ENCODE measurements at regions of chr11 and their contacts with region 1.

Region 1: GRCh38 chr11:86456052-86456939 is 81.6 kb downstream of the CCDC81 start:
- DNase-seq: peak; percentile 95
- H3K4me3 Mint-ChIP-seq: no peak overlapping the region
- H3K27ac Mint-ChIP-seq: no peak overlapping the region
- H3K4me1 Mint-ChIP-seq: peaks cover 8% of the 10 kb centered on the region
- H3K27me3 Mint-ChIP-seq: no peaks in the 10 kb centered on the region

Region 2: DNA sequence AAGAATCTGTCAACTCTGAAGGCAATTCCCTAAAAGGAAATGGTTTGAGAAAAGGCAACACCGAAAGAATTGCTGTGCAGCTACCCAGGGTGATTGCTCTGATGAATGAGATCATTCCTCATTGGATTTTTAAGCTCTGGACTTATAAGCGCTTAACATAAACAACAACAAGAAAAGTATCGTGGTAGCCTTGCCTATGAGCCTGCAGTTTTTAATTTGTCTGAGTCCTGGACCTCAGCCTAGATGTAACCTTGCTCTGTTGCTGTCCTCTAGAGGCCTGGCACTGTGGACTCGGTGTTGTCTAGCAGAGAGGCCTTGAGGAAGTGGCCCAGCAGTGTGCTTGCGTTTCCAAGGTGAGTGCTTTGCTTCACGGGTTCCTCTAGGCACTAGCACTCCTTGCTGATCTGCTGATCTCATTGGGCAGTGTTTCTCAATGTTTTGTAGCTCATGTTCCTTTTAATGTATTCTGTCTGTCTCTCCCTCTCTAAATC is 61.2 kb before region 1 on chr11:
- CTCF ChIA-PET with region 1: no interaction called
- intact Hi-C with region 1: no loop called
- DNase-seq: no peak
- H3K4me3 Mint-ChIP-seq: no peak overlapping the region
- H3K27ac Mint-ChIP-seq: no peak overlapping the region
- H3K4me1 Mint-ChIP-seq: no peaks in the 10 kb centered on the region
- H3K27me3 Mint-ChIP-seq: no peaks in the 10 kb centered on the region

Region 3: GRCh38 chr11:86608251-86608799 is 152.0 kb after region 1 on chr11:
- CTCF ChIA-PET with region 1: interaction called, 72 read pairs
- intact Hi-C with region 1: loop called (anchors 1 kb)
- DNase-seq: peak; percentile 70
- H3K4me3 Mint-ChIP-seq: no peak overlapping the region
- H3K27ac Mint-ChIP-seq: no peak overlapping the region
- H3K4me1 Mint-ChIP-seq: peaks cover 29% of the 10 kb centered on the region
- H3K27me3 Mint-ChIP-seq: no peaks in the 10 kb centered on the region

Region 4: DNA sequence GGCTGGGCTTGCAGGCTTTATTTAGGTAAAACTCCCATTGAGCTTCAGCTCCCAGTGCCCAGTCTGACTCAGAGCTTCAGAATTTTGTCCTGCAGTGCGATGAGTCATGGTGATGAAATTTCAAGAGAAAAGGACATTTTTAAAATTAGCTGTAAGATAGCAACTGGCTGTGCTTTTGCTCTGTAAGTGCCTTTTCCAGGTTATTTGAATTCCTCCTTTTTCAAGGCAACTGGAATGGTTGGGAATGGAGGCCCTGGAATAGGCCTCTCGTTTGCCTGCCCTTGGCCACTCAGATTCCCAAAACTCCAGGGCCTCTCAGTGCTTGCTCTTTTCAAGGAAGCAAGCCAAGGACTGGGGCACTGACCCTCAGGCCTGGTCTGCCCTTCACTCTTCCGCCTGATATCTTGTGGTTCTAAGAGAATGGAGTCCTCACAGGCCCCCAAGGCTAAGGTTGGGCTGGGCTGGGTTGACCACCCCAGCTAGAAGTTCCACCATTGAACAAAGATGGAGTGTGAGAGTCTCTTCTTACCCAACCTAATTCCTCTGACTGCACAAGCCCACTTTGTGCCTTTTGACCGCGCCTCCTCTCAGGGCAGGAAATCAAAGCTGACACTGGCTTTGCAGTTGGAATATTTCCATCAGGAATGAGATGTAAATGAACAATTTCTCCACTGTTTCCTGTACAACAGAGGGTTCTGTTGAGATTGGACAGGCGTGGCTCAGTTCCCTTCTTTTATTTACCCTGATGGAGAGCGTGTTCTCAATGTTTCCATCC is 284.6 kb after region 1 on chr11:
- CTCF ChIA-PET with region 1: no interaction called
- intact Hi-C with region 1: loop called (anchors 5 kb)
- DNase-seq: peak; percentile 26
- H3K4me3 Mint-ChIP-seq: no peak overlapping the region
- H3K27ac Mint-ChIP-seq: no peak overlapping the region
- H3K4me1 Mint-ChIP-seq: peaks cover 11% of the 10 kb centered on the region
- H3K27me3 Mint-ChIP-seq: peaks cover 10% of the 10 kb centered on the region

Region 5: DNA sequence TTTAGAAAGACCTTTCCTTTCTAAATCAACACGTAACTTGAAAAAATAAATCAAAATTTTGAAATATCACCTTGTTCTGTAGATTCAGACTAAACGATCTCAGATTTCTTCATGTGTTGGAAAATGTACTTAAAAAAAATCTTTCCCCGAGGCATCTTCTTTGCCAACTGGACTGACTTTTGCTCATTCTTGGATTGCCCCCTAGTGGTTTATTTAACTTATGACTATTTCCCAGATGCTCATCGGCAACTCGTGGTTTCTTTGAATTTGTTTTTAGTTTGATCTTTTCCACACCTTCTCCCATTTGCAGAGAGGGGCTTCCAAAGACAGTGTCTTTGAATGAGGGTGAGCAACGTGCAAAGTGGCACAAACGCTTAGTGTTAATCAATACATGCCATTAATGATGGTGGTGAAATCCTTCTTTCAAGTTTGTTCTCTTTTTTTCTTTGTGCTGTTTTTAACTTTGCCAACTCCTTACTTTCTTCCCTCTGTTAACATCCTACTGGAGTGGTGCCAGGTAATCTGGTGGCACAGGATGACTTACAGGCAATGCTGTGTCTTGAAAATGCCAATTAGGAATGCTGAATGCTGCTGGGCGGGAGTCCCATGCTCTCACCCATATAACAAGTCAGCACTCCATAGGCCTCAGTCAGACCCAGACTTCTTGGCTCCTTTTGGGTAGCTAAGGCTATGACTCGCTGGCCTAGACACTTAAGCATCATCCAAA is 362.3 kb after region 1 on chr11:
- CTCF ChIA-PET with region 1: interaction called, 10 read pairs
- intact Hi-C with region 1: loop called (anchors 1 kb)
- DNase-seq: no peak
- H3K4me3 Mint-ChIP-seq: no peak overlapping the region
- H3K27ac Mint-ChIP-seq: no peak overlapping the region
- H3K4me1 Mint-ChIP-seq: peaks cover 4% of the 10 kb centered on the region
- H3K27me3 Mint-ChIP-seq: peaks cover 21% of the 10 kb centered on the region

Measured in activated naive CD4-positive, alpha-beta T cell treated with anti-CD3 and anti-CD28 coated beads for 36 hours (primary cell).